ENCODE measurements at regions of chr20 and their contacts with region 1.

Region 1: DNA sequence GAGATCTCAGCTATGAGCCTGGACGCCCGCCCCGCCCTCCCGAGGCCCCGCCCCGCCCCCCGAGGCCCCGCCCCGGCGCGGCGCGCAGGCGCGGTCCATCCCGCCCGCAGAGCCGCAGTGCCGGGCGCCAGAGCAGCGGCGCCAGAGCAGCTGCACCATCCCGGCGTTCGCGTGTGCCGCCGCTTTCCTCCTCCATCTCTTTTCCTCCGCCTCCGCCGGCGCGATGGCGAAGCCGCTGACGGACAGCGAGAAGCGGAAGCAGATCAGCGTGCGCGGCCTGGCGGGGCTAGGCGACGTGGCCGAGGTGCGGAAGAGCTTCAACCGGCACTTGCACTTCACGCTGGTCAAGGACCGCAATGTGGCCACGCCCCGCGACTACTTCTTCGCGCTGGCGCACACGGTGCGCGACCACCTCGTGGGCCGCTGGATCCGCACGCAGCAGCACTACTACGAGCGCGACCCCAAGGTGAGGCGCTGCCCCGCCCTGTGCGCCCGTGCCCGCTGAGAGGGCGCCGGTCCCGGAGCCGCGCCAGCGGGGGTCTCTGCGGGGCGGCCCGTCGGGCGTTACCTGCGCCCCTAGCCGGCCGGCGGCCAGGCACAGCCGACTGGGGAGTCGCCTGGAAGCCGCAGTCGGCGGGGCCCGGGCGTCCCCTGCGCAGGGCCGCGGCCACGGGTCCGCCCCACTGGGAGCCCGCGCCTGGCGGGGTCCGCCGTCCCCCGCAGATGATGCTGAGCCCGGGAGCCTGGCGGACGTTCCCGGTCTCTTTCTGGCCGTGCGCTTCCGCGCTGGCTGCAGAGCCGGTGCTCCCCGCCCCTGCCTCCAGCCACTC is at the start of gene PYGB:
- DNase-seq: peak; percentile 94
- H3K4me3 ChIP-seq: peak within 1 kb of the TSS; percentile 95 to 98 (median 96)
- H3K27ac ChIP-seq: peak within 1 kb of the TSS; percentile 96 to 99 (median 98)
- H3K4me1 ChIP-seq: peaks cover 43 to 62% (median 50%) of the 10 kb centered on the region in 4 donors
- H3K27me3 ChIP-seq: no peaks in the 10 kb centered on the region
- CTCF ChIP-seq: peak in 1 of 3 experiments; percentile 5
- EP300 ChIP-seq: no peak
- POLR2A ChIP-seq: peak; percentile 86
- total RNA-seq, gene PYGB: 398 to 632 (median 462) TPM

Region 2: DNA sequence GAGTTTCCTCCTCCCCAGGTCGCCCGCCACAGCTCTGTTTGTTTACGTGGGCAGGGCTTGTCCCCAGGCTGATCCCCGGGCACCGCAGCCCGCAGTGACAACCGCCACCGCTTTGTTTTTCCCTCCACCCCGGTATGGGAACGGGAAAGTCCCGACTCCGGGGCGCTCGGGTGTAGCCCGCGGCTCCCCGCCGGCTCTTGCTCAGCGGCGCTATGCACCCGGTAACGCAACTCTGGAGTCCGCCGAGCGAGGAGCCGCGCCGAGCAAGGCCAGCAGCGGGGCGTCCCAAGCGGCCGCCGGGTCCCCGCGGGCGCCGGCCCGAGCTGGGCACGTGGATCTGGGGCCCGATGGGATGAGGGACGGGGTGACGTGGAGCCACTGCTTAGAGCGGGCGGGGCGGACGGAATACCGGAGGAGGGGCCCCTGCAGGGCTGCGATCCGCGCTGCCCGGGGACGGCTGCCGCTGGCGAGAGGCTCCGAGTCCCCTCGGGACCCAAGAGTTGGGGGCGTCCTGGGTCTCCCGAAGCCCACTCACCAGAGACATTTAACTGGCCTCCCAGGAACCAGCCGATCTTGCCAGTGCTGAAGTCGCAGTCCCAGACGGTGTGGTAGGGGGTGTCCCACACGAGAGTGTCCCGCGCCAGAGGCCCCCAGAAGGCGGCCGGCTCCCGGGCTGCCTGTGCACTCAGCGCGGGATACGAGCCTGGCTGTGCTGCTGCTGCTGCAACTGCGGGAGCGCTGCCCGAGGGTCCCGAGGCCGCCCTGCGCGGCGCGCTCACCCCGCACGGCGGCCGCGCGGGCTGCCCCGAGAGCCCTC is 190.7 kb before region 1 on chr20:
- intact Hi-C with region 1: loop called (anchors 5 kb)
- DNase-seq: no peak
- H3K4me3 ChIP-seq: peak overlapping the region; percentile 85 to 95 (median 89)
- H3K27ac ChIP-seq: peak overlapping the region; percentile 96 to 98 (median 97)
- H3K4me1 ChIP-seq: peaks cover 57 to 69% (median 61%) of the 10 kb centered on the region in 4 donors
- H3K27me3 ChIP-seq: no peaks in the 10 kb centered on the region
- CTCF ChIP-seq: no peak
- EP300 ChIP-seq: no peak
- POLR2A ChIP-seq: peak; percentile 48

Region 3: GRCh38 chr20:25195014-25195961 is 52.9 kb before region 1 on chr20 and contains the start of gene ENTPD6:
- intact Hi-C with region 1: loop called (anchors 5 kb)
- DNase-seq: peak; percentile 97
- H3K4me3 ChIP-seq: peak within 1 kb of the TSS; percentile 79 to 95 (median 94)
- H3K27ac ChIP-seq: peak within 1 kb of the TSS; percentile 84 to 94 (median 89)
- H3K4me1 ChIP-seq: peaks cover 39 to 55% (median 50%) of the 10 kb centered on the region in 4 donors
- H3K27me3 ChIP-seq: no peaks in the 10 kb centered on the region
- CTCF ChIP-seq: peak in 2 of 3 experiments; percentile 29 to 42
- EP300 ChIP-seq: no peak
- POLR2A ChIP-seq: peak; percentile 64
- total RNA-seq, gene ENTPD6: 39.0 to 44.1 (median 43.5) TPM

Region 4: DNA sequence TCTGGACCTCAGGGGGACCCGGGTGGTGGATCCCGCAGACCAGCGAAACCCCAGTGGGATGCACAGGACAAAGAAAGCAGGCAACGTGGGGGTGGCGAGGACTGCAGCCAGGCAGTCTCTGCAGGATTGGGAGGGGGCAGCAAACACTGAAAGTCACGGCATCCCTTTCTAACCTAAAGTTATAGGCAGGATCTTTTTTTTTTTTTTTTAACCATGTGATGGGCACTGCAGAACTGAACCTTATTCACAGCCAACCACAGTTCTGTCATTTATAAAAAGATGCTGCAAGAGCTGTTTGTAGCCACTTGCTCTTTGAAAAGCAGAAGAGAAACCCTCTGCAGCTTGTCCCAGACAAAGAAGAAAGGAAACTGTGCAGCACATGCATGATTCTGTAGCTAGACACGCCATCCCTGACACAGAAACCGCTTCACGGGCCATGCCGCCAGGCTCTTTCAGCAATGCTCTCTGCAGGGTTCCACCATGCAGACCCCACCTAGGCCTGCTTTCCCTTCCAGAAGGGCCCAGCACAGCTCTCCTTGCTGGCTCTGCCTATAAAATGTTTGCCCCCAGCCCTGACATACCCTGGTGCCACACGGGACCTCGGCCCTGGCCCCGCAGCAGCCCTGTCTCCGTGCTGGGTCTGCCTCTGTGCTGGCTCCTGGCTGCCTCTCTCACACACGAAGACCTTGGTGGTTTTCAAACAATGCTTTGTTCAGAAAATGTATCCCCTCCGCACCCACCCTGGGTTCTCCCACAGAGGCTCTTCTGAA is 70.5 kb after region 1 on chr20:
- intact Hi-C with region 1: no loop called
- DNase-seq: no peak
- H3K4me3 ChIP-seq: no peak overlapping the region
- H3K27ac ChIP-seq: peak overlapping the region in 1 of 4 donors; percentile 21
- H3K4me1 ChIP-seq: peaks cover 7 to 16% (median 10%) of the 10 kb centered on the region in 4 donors
- H3K27me3 ChIP-seq: no peaks in the 10 kb centered on the region
- CTCF ChIP-seq: no peak
- EP300 ChIP-seq: no peak
- POLR2A ChIP-seq: no peak

Region 5: DNA sequence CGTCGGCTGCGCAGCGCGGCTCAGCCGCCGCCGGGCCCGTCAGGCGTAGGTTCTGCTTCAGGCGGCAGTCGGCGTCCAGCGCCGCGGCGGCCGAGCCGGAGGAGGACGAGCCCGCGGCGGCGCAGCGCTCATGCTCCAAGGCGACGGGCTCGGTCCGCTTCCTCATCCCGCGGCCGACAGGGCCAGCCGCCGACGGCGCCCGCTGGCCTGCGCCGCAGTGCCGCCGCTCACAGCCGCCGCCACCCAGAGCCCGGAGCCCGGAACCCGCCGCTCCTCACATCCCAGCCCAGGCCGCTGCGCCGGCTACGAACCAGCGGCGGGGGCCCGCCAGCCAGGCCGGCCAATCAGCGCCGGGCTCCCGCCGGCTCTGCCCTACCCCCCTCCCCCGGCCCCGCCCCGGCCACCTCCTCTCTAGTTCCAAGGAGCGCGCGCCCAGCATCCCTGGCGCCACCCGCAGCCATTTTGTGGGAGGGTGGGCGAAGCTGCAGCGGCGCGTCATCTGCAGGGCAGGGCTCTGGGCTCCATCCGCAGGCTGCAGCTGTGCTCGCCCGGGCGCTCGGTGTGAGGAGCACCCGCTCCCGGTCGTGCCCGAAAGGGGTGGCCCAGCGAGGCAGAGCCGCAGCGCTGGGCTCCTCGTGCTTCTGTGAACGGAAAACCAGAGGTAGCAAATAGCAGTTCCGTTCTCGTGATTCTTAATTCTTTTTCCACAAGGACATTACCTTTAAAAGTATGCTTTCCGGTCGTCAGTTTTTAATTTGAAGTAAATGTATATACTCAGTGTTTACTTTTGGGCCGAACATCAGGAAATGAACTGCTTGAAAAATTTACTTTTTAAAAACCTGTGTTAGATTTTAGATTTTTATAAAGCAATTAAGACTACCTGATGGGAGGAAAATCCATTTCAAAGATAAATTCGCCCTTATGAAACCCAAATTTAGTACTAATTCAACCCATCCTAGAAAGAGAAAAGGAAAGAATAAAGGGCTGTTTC is 142.7 kb after region 1 on chr20 and contains the start of gene ABHD12:
- intact Hi-C with region 1: loop called (anchors 2 kb)
- DNase-seq: peak; percentile 99
- H3K4me3 ChIP-seq: peak within 1 kb of the TSS; percentile 77 to 92 (median 90)
- H3K27ac ChIP-seq: peak within 1 kb of the TSS; percentile 92 to 98 (median 94)
- H3K4me1 ChIP-seq: peaks cover 4 to 20% (median 19%) of the 10 kb centered on the region in 4 donors
- H3K27me3 ChIP-seq: no peaks in the 10 kb centered on the region
- CTCF ChIP-seq: no peak
- EP300 ChIP-seq: no peak
- POLR2A ChIP-seq: no peak
- total RNA-seq, gene ABHD12: 27.0 to 41.6 (median 35.4) TPM